CD4-positive, alpha-beta T cell (primary cell): ENCODE measurements at regions of chr10 and their contacts with region 1.

Region 1: GRCh38 chr10:3785257-3785850 is 345 bp upstream of the KLF6 start:
- DNase-seq: peak; percentile 99 to 100 (median 99)
- ATAC-seq: peak; percentile 71
- H3K4me3 ChIP-seq: peak overlapping the region; percentile 80
- H3K4me3 Mint-ChIP-seq: peak overlapping the region; percentile 98
- H3K27ac ChIP-seq: peak overlapping the region; percentile 99 to 100
- H3K27ac Mint-ChIP-seq: peak overlapping the region; percentile 97
- H3K4me1 ChIP-seq: peaks cover 38% of the 10 kb centered on the region
- H3K4me1 Mint-ChIP-seq: peaks cover 44% of the 10 kb centered on the region
- H3K27me3 ChIP-seq: no peaks in the 10 kb centered on the region
- H3K27me3 Mint-ChIP-seq: no peaks in the 10 kb centered on the region
- CTCF ChIP-seq: no peak

Region 2: GRCh38 chr10:3757638-3758490 is 27.5 kb before region 1 on chr10:
- CTCF ChIA-PET with region 1: interaction called, 6 read pairs
- POLR2A ChIA-PET with region 1: interaction called, 98 read pairs
- intact Hi-C with region 1: no loop called
- DNase-seq: peak; percentile 36 to 85 (median 60)
- ATAC-seq: peak; percentile 80
- H3K4me3 ChIP-seq: no peak overlapping the region
- H3K4me3 Mint-ChIP-seq: peak overlapping the region; percentile 71
- H3K27ac ChIP-seq: peak overlapping the region; percentile 60 to 78
- H3K27ac Mint-ChIP-seq: peak overlapping the region; percentile 90
- H3K4me1 ChIP-seq: peaks cover 71% of the 10 kb centered on the region
- H3K4me1 Mint-ChIP-seq: peaks cover 39% of the 10 kb centered on the region
- H3K27me3 ChIP-seq: no peaks in the 10 kb centered on the region
- H3K27me3 Mint-ChIP-seq: no peaks in the 10 kb centered on the region
- CTCF ChIP-seq: no peak

Region 3: DNA sequence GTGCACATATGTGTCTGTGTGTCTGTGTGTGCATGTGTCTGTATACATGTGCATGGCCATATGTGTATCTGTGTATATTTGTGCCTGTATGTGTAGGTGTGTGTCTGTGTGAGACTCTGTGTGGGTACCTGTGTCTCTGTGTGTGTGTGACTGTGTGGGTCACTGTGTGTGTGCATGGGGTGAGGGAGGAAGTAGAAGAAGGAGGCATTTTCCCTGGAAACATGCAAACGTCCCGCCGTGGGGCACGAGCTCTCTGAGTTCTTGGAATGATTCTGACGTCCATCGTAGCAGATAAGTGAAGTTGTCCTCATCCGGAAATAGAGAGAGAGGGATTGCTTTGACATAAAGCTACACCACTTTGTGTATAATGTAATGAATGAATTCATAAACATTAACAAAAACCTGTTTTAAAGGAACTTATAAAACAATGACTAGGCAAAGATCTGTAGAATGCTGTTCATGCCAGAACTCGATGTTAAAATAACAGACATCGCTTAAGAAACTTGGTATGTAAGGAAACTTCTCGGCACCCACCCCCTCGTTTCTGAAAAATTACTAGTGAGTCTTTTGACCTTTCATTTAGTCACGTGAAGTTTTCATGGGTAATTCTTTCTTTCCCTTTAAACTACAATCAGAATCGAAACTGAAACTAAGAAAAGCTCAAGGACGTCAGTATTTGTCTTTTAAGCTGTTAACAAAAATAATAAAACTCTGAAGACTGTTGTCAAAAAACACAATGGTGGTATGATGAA is 43.2 kb after region 1 on chr10:
- CTCF ChIA-PET with region 1: no interaction called
- POLR2A ChIA-PET with region 1: interaction called, 148 read pairs
- intact Hi-C with region 1: no loop called
- DNase-seq: peak in 5 of 14 experiments; percentile 37 to 85 (median 72)
- ATAC-seq: peak; percentile 64
- H3K4me3 ChIP-seq: peak overlapping the region; percentile 53
- H3K4me3 Mint-ChIP-seq: peak overlapping the region; percentile 88
- H3K27ac ChIP-seq: peak overlapping the region; percentile 61 to 65
- H3K27ac Mint-ChIP-seq: peak overlapping the region; percentile 85
- H3K4me1 ChIP-seq: peaks cover 17% of the 10 kb centered on the region
- H3K4me1 Mint-ChIP-seq: peaks cover 21% of the 10 kb centered on the region
- H3K27me3 ChIP-seq: no peaks in the 10 kb centered on the region
- H3K27me3 Mint-ChIP-seq: no peaks in the 10 kb centered on the region
- CTCF ChIP-seq: no peak

Region 4: DNA sequence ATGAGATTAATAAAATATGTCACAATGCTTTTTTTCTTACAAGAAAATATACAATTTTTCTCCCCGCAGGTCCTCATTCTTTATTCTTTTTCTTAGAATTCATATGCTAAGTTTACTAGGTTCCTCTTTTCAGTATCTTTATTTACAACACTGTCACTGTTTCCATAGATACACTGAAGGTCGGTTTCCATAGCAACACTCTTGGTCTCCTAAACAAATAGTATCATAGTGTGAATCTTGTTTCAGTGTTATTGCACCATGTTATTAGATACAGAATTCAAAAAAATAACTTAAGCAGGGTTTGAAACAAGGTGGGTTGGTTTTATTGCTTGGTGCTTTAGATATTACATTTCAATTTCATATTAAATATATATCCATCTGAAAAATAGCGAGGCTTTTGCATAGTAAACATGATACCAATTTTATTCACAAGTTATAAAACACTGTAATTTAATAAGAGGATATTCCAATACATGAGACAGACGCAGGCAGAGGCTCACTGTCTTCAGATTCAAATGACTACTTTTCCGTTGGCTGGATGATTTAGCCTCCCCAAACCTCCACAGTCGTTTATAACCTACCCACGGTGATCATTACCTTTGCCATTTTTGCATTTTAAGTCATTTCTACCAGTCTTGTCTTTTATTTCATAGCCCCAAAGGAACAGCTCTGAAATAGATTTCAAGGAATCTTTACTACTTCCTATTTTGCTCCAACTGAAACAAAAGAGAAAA is 88.5 kb after region 1 on chr10:
- CTCF ChIA-PET with region 1: interaction called, 3 read pairs
- POLR2A ChIA-PET with region 1: interaction called, 147 read pairs
- intact Hi-C with region 1: loop called (anchors 2 kb)
- DNase-seq: peak in 4 of 14 experiments; percentile 35 to 93 (median 91)
- ATAC-seq: peak; percentile 47
- H3K4me3 ChIP-seq: no peak overlapping the region
- H3K4me3 Mint-ChIP-seq: peak overlapping the region; percentile 72
- H3K27ac ChIP-seq: peak overlapping the region; percentile 81 to 89
- H3K27ac Mint-ChIP-seq: peak overlapping the region; percentile 84
- H3K4me1 ChIP-seq: peaks cover 52% of the 10 kb centered on the region
- H3K4me1 Mint-ChIP-seq: peaks cover 65% of the 10 kb centered on the region
- H3K27me3 ChIP-seq: no peaks in the 10 kb centered on the region
- H3K27me3 Mint-ChIP-seq: no peaks in the 10 kb centered on the region
- CTCF ChIP-seq: no peak

Region 5: GRCh38 chr10:3935141-3935540 is 149.8 kb after region 1 on chr10:
- CTCF ChIA-PET with region 1: no interaction called
- POLR2A ChIA-PET with region 1: interaction called, 11 read pairs
- intact Hi-C with region 1: loop called in 1 of 2 experiments (anchors 10 kb)
- DNase-seq: peak in 13 of 14 experiments; percentile 12 to 75 (median 23)
- ATAC-seq: peak; percentile 83
- H3K4me3 ChIP-seq: peak overlapping the region; percentile 47
- H3K4me3 Mint-ChIP-seq: peak overlapping the region; percentile 83
- H3K27ac ChIP-seq: peak overlapping the region in 1 of 2 donors; percentile 75
- H3K27ac Mint-ChIP-seq: peak overlapping the region; percentile 86
- H3K4me1 ChIP-seq: peaks cover 8% of the 10 kb centered on the region
- H3K4me1 Mint-ChIP-seq: peaks cover 27% of the 10 kb centered on the region
- H3K27me3 ChIP-seq: no peaks in the 10 kb centered on the region
- H3K27me3 Mint-ChIP-seq: no peaks in the 10 kb centered on the region
- CTCF ChIP-seq: no peak

Region 6: GRCh38 chr10:3972460-3973301 is 187.3 kb after region 1 on chr10:
- CTCF ChIA-PET with region 1: no interaction called
- POLR2A ChIA-PET with region 1: interaction called, 40 read pairs
- intact Hi-C with region 1: no loop called
- DNase-seq: peak in 6 of 14 experiments; percentile 14 to 76 (median 54)
- ATAC-seq: peak; percentile 69
- H3K4me3 ChIP-seq: peak overlapping the region; percentile 0
- H3K4me3 Mint-ChIP-seq: peak overlapping the region; percentile 85
- H3K27ac ChIP-seq: peak overlapping the region; percentile 33 to 46
- H3K27ac Mint-ChIP-seq: peak overlapping the region; percentile 90
- H3K4me1 ChIP-seq: peaks cover 74% of the 10 kb centered on the region
- H3K4me1 Mint-ChIP-seq: peaks cover 54% of the 10 kb centered on the region
- H3K27me3 ChIP-seq: no peaks in the 10 kb centered on the region
- H3K27me3 Mint-ChIP-seq: no peaks in the 10 kb centered on the region
- CTCF ChIP-seq: no peak

Region 7: GRCh38 chr10:4131407-4132228 is 346.3 kb after region 1 on chr10:
- CTCF ChIA-PET with region 1: no interaction called
- POLR2A ChIA-PET with region 1: interaction called, 17 read pairs
- intact Hi-C with region 1: no loop called
- DNase-seq: peak in 6 of 14 experiments; percentile 13 to 91 (median 57)
- ATAC-seq: peak; percentile 84
- H3K4me3 ChIP-seq: peak overlapping the region; percentile 27
- H3K4me3 Mint-ChIP-seq: no peak overlapping the region
- H3K27ac ChIP-seq: peak overlapping the region in 1 of 2 donors; percentile 49
- H3K27ac Mint-ChIP-seq: no peak overlapping the region
- H3K4me1 ChIP-seq: peaks cover 37% of the 10 kb centered on the region
- H3K4me1 Mint-ChIP-seq: peaks cover 11% of the 10 kb centered on the region
- H3K27me3 ChIP-seq: no peaks in the 10 kb centered on the region
- H3K27me3 Mint-ChIP-seq: no peaks in the 10 kb centered on the region
- CTCF ChIP-seq: no peak